Spleen (tissue), 13 donors: ENCODE measurements at regions of chr21 and their contacts with region 1.

Region 1: GRCh38 chr21:25708467-25709065 is 26.1 kb downstream of the ATP5PF start:
- DNase-seq: no peak
- H3K4me3 ChIP-seq: no peak overlapping the region
- H3K27ac ChIP-seq: no peak overlapping the region
- H3K4me1 ChIP-seq: peaks cover 0 to 6% (median 0%) of the 10 kb centered on the region in 6 donors
- H3K27me3 ChIP-seq: no peaks in the 10 kb centered on the region
- CTCF ChIP-seq: peak; percentile 32 to 87 (median 65)
- POLR2A ChIP-seq: no peak

Region 2: GRCh38 chr21:25421327-25422028 is 287.1 kb before region 1 on chr21:
- intact Hi-C with region 1: loop called (anchors 10 kb)
- DNase-seq: no peak
- H3K4me3 ChIP-seq: peak overlapping the region in 1 of 8 donors; percentile 27
- H3K27ac ChIP-seq: peak overlapping the region; percentile 30 to 82 (median 62)
- H3K4me1 ChIP-seq: peaks cover 13 to 49% (median 30%) of the 10 kb centered on the region in 6 donors
- H3K27me3 ChIP-seq: no peaks in the 10 kb centered on the region
- CTCF ChIP-seq: peak in 10 of 11 experiments; percentile 30 to 76 (median 56)
- POLR2A ChIP-seq: no peak

Region 3: GRCh38 chr21:25607151-25608043 is 101.2 kb before region 1 on chr21 and contains the start of gene MRPL39:
- intact Hi-C with region 1: loop called (anchors 5 kb)
- DNase-seq: peak; percentile 97
- H3K4me3 ChIP-seq: peak within 1 kb of the TSS; percentile 73 to 90 (median 81)
- H3K27ac ChIP-seq: peak within 1 kb of the TSS; percentile 73 to 90 (median 87)
- H3K4me1 ChIP-seq: peaks cover 25 to 59% (median 41%) of the 10 kb centered on the region in 6 donors
- H3K27me3 ChIP-seq: no peaks in the 10 kb centered on the region
- CTCF ChIP-seq: peak in 10 of 11 experiments; percentile 25 to 62 (median 50)
- POLR2A ChIP-seq: no peak
- total RNA-seq, gene MRPL39: 14.4 to 24.7 (median 20.0) TPM